CD4-positive, alpha-beta memory T cell (primary cell): ENCODE measurements at regions of chr10 and their contacts with region 1.

Region 1: GRCh38 chr10:88835096-88835909 is 16.3 kb downstream of the ANKRD22 start:
- DNase-seq: peak; percentile 80 to 86 (median 82)
- H3K4me3 ChIP-seq: no peak overlapping the region
- H3K4me3 Mint-ChIP-seq: no peak overlapping the region
- H3K27ac ChIP-seq: no peak overlapping the region
- H3K27ac Mint-ChIP-seq: peak overlapping the region in 1 of 7 donors; percentile 29
- H3K4me1 ChIP-seq: peaks cover 46% of the 10 kb centered on the region
- H3K4me1 Mint-ChIP-seq: peaks cover 26 to 34% (median 30%) of the 10 kb centered on the region in 4 donors
- H3K27me3 ChIP-seq: no peaks in the 10 kb centered on the region
- H3K27me3 Mint-ChIP-seq: no peaks in the 10 kb centered on the region

Region 2: DNA sequence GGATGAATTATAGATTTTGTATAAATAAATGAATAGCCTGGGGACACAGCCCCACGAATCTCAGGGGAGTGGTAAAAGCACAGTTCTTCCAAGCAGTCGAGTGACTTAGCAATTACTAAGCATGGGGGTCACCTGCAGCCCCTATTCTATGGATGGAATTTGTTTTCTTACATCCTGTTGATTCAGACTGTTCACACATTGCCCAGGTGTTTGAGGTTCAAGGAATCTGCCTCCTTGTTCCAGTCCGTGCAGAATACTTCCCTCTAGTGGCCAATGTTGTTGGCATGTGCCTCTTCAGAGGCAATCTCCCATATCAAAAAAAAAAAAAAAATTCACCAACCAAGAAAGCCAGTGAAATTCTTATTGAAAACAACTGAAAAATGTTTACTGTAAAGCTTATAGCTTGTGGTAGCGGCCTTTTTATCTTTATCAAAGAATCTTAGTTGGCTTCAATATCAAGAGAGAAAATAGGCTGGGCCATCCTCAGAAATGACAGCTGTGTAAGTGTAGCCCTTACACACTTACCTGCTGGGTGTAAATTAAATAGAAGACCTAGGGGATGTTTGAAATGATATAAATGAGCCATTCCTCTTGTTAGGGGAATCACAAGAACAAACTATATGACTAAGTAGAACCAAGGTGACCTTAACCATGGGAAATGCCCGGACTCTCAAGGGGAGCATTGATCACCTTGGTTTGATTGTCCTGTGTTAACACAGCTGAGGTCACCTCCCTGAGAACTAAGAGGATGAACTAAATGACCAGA is 24.9 kb before region 1 on chr10:
- CTCF ChIA-PET with region 1: interaction called, 146 read pairs
- POLR2A ChIA-PET with region 1: no interaction called
- intact Hi-C with region 1: loop called (anchors 1 kb)
- DNase-seq: peak; percentile 42 to 56 (median 45)
- H3K4me3 ChIP-seq: no peak overlapping the region
- H3K4me3 Mint-ChIP-seq: no peak overlapping the region
- H3K27ac ChIP-seq: no peak overlapping the region
- H3K27ac Mint-ChIP-seq: peak overlapping the region in 2 of 7 donors; percentile 16 to 30
- H3K4me1 ChIP-seq: peaks cover 10% of the 10 kb centered on the region
- H3K4me1 Mint-ChIP-seq: peaks cover 10 to 18% (median 15%) of the 10 kb centered on the region in 4 donors
- H3K27me3 ChIP-seq: no peaks in the 10 kb centered on the region
- H3K27me3 Mint-ChIP-seq: no peaks in the 10 kb centered on the region

Region 3: DNA sequence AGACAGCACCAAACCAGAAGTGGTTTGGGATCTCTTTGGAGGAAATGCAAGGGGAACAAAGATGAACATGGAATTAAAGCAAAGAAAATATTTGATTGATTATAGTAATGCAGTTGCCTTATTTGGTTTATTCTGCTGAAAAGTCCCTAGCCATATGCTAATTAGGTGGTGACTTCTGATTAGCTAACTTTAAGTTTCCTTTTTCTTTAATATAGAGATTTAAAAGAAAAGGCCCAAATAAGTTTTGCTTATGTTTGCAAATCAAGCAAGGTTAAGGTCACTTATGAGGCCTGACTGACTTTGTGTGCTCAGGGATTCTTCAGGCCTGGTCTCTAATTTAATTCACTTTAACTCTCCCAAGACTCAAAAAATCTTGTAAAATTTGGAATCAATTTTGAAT is 22.5 kb after region 1 on chr10:
- CTCF ChIA-PET with region 1: interaction called, 15 read pairs
- POLR2A ChIA-PET with region 1: no interaction called
- intact Hi-C with region 1: no loop called
- DNase-seq: no peak
- H3K4me3 ChIP-seq: no peak overlapping the region
- H3K4me3 Mint-ChIP-seq: no peak overlapping the region
- H3K27ac ChIP-seq: no peak overlapping the region
- H3K27ac Mint-ChIP-seq: no peak overlapping the region
- H3K4me1 ChIP-seq: no peaks in the 10 kb centered on the region
- H3K4me1 Mint-ChIP-seq: no peaks in the 10 kb centered on the region
- H3K27me3 ChIP-seq: no peaks in the 10 kb centered on the region
- H3K27me3 Mint-ChIP-seq: peaks cover 2% of the 10 kb centered on the region in 2 donors

Region 4: DNA sequence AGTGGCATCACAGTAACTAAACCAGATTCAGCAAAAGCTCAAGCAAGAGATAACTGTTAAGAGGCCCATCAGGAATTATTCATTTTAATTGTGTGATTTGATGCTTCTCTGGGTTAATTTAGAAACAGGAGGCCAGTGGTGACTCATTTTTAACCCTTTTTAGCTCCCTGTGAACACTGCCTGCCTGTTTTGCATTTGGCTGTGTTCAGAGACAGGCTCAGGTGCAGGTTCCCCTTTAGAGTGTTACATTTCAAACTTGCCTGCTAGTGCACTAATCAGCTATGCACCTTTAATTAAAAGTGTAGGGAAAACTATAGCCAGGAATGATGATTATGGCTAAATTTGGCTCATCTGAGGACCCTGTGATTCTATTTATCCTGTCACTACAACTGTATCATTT is 51.3 kb after region 1 on chr10:
- CTCF ChIA-PET with region 1: interaction called, 40 read pairs
- POLR2A ChIA-PET with region 1: interaction called, 3 read pairs
- intact Hi-C with region 1: no loop called
- DNase-seq: no peak
- H3K4me3 ChIP-seq: no peak overlapping the region
- H3K4me3 Mint-ChIP-seq: no peak overlapping the region
- H3K27ac ChIP-seq: no peak overlapping the region
- H3K27ac Mint-ChIP-seq: no peak overlapping the region
- H3K4me1 ChIP-seq: peaks cover 84% of the 10 kb centered on the region
- H3K4me1 Mint-ChIP-seq: peaks cover 63 to 84% (median 72%) of the 10 kb centered on the region in 4 donors
- H3K27me3 ChIP-seq: no peaks in the 10 kb centered on the region
- H3K27me3 Mint-ChIP-seq: no peaks in the 10 kb centered on the region

Region 5: DNA sequence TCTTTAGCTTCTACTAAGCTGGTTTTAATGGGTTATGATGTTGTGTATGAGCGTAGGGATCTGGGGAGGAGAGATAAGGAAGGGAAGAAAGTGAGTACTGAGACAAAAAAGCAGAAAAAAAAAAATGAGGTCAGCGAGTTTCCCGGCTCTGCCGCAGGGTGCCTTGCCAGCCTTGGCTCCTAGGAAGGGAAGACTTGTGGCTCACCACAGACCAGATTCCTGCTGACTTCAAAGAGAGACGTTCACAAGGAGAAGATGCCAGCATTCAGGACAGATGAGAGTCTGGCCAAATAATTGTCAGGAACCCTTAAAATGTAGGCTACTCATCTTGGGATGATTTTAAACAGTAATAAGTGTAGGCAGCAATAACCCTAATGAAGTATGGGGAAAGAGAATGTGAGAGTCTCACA is 143.9 kb after region 1 on chr10:
- CTCF ChIA-PET with region 1: interaction called, 11 read pairs
- POLR2A ChIA-PET with region 1: no interaction called
- intact Hi-C with region 1: no loop called
- DNase-seq: no peak
- H3K4me3 ChIP-seq: no peak overlapping the region
- H3K4me3 Mint-ChIP-seq: peak overlapping the region in 3 of 8 donors; percentile 17 to 57 (median 57)
- H3K27ac ChIP-seq: no peak overlapping the region
- H3K27ac Mint-ChIP-seq: peak overlapping the region in 3 of 7 donors; percentile 12 to 60 (median 32)
- H3K4me1 ChIP-seq: peaks cover 27% of the 10 kb centered on the region
- H3K4me1 Mint-ChIP-seq: peaks cover 21 to 40% (median 27%) of the 10 kb centered on the region in 4 donors
- H3K27me3 ChIP-seq: no peaks in the 10 kb centered on the region
- H3K27me3 Mint-ChIP-seq: no peaks in the 10 kb centered on the region